AG04450 (cell line): ENCODE measurements at regions of chr2 and their contacts with region 1.

Region 1: DNA sequence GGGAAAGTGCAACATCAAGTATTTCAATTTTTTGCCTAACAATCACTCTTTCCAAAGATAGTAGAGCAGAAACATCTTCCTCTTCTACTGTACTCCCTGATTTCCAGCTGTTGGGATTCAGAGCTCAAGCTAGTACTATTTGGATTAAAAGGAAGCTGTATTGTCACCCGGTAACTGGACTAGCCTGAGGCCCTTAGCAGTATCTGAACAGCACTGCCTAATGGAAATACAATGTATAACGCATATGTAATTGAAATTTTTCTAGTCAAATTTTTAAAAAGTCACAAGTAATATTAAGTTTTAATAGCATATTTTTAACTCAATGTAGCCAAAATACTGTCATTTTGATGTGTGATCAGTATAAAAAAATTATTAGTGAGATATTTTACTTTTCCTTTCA is 86.2 kb downstream of the COX7A2L start:
- DNase-seq: no peak
- H3K4me3 ChIP-seq: no peak overlapping the region
- H3K27ac ChIP-seq: no peak overlapping the region
- H3K27me3 ChIP-seq: no peaks in the 10 kb centered on the region
- CTCF ChIP-seq: 0 out of 2 replicates have a peak, but pooled peaks have one; percentile 4

Region 2: GRCh38 chr2:42256505-42256904 is 18.4 kb before region 1 on chr2:
- CTCF ChIA-PET with region 1: no interaction called
- POLR2A ChIA-PET with region 1: no interaction called
- DNase-seq: no peak
- H3K4me3 ChIP-seq: no peak overlapping the region
- H3K27ac ChIP-seq: no peak overlapping the region
- H3K27me3 ChIP-seq: no peaks in the 10 kb centered on the region
- CTCF ChIP-seq: no peak

Region 3: GRCh38 chr2:42298996-42299754 is 24.3 kb after region 1 on chr2:
- CTCF ChIA-PET with region 1: interaction called, 10 read pairs
- POLR2A ChIA-PET with region 1: no interaction called
- DNase-seq: no peak
- H3K4me3 ChIP-seq: no peak overlapping the region
- H3K27ac ChIP-seq: no peak overlapping the region
- H3K27me3 ChIP-seq: no peaks in the 10 kb centered on the region
- CTCF ChIP-seq: no peak

Region 4: GRCh38 chr2:42337846-42338566 is 63.1 kb after region 1 on chr2:
- CTCF ChIA-PET with region 1: no interaction called
- POLR2A ChIA-PET with region 1: interaction called, 10 read pairs
- DNase-seq: no peak
- H3K4me3 ChIP-seq: no peak overlapping the region
- H3K27ac ChIP-seq: no peak overlapping the region
- H3K27me3 ChIP-seq: no peaks in the 10 kb centered on the region
- CTCF ChIP-seq: no peak